Activated CD4-positive, alpha-beta T cell treated with anti-CD3 and anti-CD28 coated beads for 36 hours (primary cell): ENCODE measurements at regions of chr14 and their contacts with region 1.

Region 1: GRCh38 chr14:104689109-104689880 is at the start of gene INF2:
- DNase-seq: peak; percentile 73
- ATAC-seq: peak; percentile 69
- H3K4me3 Mint-ChIP-seq: peak within 1 kb of the TSS; percentile 72
- H3K27ac Mint-ChIP-seq: peak within 1 kb of the TSS; percentile 60
- H3K4me1 Mint-ChIP-seq: peaks cover 34% of the 10 kb centered on the region
- H3K27me3 Mint-ChIP-seq: no peaks in the 10 kb centered on the region
- total RNA-seq, gene INF2: 60.8 to 66.0 TPM

Region 2: GRCh38 chr14:104634886-104635570 is 54.3 kb before region 1 on chr14:
- CTCF ChIA-PET with region 1: no interaction called
- POLR2A ChIA-PET with region 1: no interaction called
- intact Hi-C with region 1: no loop called
- DNase-seq: no peak
- ATAC-seq: no peak
- H3K4me3 Mint-ChIP-seq: no peak overlapping the region
- H3K27ac Mint-ChIP-seq: no peak overlapping the region
- H3K4me1 Mint-ChIP-seq: no peaks in the 10 kb centered on the region
- H3K27me3 Mint-ChIP-seq: peaks cover 8% of the 10 kb centered on the region

Region 3: DNA sequence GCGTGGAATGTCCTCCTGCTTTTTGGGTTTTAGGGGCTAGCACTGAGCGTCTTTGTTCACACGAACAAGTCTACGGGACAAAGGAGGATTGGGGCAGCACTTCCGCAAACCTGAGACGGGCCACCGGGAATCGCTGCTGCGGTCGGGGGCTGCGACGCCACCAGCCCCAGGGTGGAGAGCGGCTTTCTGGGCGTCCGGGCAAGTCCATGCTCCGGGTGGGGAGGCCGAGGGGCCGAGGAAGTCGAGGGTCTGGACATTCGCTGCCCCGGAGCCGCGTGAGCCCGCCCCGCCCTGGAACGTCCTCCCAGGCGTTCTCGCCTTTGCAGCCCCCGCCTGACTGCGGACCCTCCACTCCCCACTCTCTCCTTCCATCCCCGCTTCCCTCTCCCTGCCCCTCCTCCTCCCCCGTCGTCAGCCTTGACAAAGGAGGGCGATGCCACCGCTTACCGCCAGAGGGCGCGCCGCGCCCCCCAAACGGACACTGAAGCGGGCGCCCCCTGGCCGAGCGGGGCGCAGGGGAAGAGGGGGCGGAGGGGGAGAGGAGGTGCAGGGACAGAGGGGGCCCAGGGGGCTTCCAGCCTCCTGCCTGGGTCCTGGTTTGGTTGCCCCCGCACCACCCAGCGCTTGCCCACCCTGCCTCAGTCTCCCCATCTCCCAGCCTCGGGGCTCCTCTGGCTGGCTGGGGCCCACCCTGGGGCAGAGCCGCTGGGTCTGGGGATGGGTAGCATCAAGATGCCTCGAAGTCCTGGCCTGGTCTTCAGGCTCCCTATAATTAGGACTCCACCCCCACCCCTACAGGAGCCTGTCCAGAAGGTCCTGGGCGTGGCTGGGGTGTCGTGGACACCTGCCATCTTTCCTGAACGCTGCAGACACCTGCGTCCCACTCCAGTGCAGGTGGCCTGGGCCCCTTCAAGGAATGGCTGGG is 39.0 kb before region 1 on chr14:
- CTCF ChIA-PET with region 1: no interaction called
- POLR2A ChIA-PET with region 1: no interaction called
- intact Hi-C with region 1: loop called in 1 of 2 experiments (anchors 1 kb)
- DNase-seq: peak; percentile 80
- ATAC-seq: peak; percentile 92
- H3K4me3 Mint-ChIP-seq: no peak overlapping the region
- H3K27ac Mint-ChIP-seq: no peak overlapping the region
- H3K4me1 Mint-ChIP-seq: no peaks in the 10 kb centered on the region
- H3K27me3 Mint-ChIP-seq: peaks cover 3% of the 10 kb centered on the region

Region 4: GRCh38 chr14:104677512-104678332 is 11.6 kb before region 1 on chr14:
- CTCF ChIA-PET with region 1: interaction called, 3 read pairs
- POLR2A ChIA-PET with region 1: interaction called, 8 read pairs
- intact Hi-C with region 1: loop called in 1 of 2 experiments (anchors 1 kb)
- DNase-seq: peak; percentile 88
- ATAC-seq: peak; percentile 81
- H3K4me3 Mint-ChIP-seq: peak overlapping the region; percentile 62
- H3K27ac Mint-ChIP-seq: peak overlapping the region; percentile 79
- H3K4me1 Mint-ChIP-seq: peaks cover 14% of the 10 kb centered on the region
- H3K27me3 Mint-ChIP-seq: no peaks in the 10 kb centered on the region

Region 5: DNA sequence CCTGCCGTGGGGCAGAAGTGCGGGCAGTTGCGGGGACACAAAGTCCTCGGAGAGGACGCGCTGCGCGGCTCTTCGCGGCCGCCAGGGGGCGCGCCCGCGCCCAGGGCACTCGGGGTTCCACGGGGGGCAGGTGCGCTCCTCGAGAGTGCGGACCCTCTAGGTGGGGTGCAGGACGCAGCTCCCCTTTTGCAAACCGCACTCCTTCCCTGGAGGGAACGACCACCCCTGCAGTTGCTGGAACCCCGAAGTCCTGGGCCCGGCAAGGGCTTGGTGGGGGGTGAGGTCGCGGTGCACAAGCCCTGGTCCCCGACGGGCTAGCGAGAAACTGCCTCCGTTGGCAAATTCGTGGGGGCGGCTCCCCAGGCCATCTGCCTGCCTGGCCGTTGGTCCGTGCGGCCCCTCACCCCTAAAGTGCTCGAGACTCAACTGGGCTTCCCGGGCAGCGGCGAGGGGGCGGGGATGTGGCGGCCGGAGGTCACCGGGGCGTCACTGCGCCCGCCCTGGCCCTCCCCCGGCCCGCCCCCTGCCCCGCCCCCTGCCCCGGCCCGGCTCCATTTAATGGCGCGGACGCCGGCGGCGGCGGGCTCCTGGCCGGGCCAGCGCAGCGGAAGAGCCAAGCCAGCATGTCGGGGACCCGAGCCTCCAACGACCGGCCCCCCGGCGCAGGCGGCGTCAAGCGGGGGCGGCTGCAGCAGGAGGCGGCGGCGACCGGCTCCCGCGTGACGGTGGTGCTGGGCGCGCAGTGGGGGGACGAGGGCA is 34.5 kb after region 1 on chr14 and contains the start of gene ADSS1:
- CTCF ChIA-PET with region 1: no interaction called
- POLR2A ChIA-PET with region 1: no interaction called
- intact Hi-C with region 1: loop called in 1 of 2 experiments (anchors 1 kb)
- DNase-seq: peak; percentile 73
- ATAC-seq: peak; percentile 72
- H3K4me3 Mint-ChIP-seq: peak within 1 kb of the TSS; percentile 57
- H3K27ac Mint-ChIP-seq: no peak within 1 kb of the TSS
- H3K4me1 Mint-ChIP-seq: no peaks in the 10 kb centered on the region
- H3K27me3 Mint-ChIP-seq: no peaks in the 10 kb centered on the region
- total RNA-seq, gene ADSS1: 2.2 to 3.2 TPM

Region 6: GRCh38 chr14:105005329-105005928 is 316.1 kb after region 1 on chr14:
- CTCF ChIA-PET with region 1: no interaction called
- POLR2A ChIA-PET with region 1: no interaction called
- intact Hi-C with region 1: no loop called
- DNase-seq: no peak
- ATAC-seq: no peak
- H3K4me3 Mint-ChIP-seq: no peak overlapping the region
- H3K27ac Mint-ChIP-seq: no peak overlapping the region
- H3K4me1 Mint-ChIP-seq: peaks cover 7% of the 10 kb centered on the region
- H3K27me3 Mint-ChIP-seq: no peaks in the 10 kb centered on the region